Caco-2 (cell line): ENCODE measurements at regions of chr19 and their contacts with region 1.

Region 1: GRCh38 chr19:51593969-51594773 is 23.1 kb downstream of the ZNF175 start:
- DNase-seq: peak; percentile 98
- H3K4me3 ChIP-seq: peak overlapping the region; percentile 65
- H3K4me3 Mint-ChIP-seq: peak overlapping the region; percentile 93
- H3K27ac Mint-ChIP-seq: peak overlapping the region; percentile 63
- H3K4me1 ChIP-seq: peaks cover 14% of the 10 kb centered on the region
- H3K4me1 Mint-ChIP-seq: peaks cover 14% of the 10 kb centered on the region
- H3K27me3 ChIP-seq: no peaks in the 10 kb centered on the region
- H3K27me3 Mint-ChIP-seq: no peaks in the 10 kb centered on the region
- CTCF ChIP-seq: no peak

Region 2: GRCh38 chr19:51511353-51511752 is 82.8 kb before region 1 on chr19:
- CTCF ChIA-PET with region 1: no interaction called
- POLR2A ChIA-PET with region 1: no interaction called
- intact Hi-C with region 1: no loop called
- DNase-seq: no peak
- H3K4me3 ChIP-seq: no peak overlapping the region
- H3K4me3 Mint-ChIP-seq: no peak overlapping the region
- H3K27ac Mint-ChIP-seq: no peak overlapping the region
- H3K4me1 ChIP-seq: peaks cover 8% of the 10 kb centered on the region
- H3K4me1 Mint-ChIP-seq: no peaks in the 10 kb centered on the region
- H3K27me3 ChIP-seq: no peaks in the 10 kb centered on the region
- H3K27me3 Mint-ChIP-seq: peaks cover 5% of the 10 kb centered on the region
- CTCF ChIP-seq: no peak

Region 3: DNA sequence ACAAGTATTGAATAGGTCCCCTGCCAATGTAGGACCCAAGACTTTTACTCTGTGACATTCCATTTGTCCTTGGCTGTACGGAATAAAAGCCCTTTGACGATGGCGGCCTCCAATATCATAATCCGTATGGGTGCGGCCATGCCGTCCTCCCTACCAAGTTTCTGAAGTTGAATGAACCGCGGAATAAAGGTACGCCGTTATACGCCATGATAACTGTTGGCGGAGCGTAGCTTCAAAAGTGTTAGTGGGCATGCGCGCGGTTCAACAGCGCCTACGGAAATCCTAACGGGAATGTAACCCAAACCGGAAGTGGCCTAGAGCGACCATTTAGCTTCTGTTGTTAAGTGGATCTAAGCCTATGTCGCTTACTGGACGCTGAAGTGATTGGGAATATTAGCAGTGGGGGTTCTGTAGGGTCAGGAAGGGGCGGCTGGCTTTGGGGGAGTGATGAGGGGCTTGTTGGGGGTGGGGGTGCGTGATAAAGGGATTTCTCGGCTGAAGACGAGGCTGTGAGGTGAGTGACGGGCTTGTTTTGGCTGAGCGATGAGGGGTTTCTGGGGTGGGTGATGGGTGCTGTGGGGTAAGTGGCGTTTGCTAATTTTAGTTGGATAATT is 23.1 kb before region 1 on chr19 and contains the start of gene ZNF175:
- CTCF ChIA-PET with region 1: interaction called, 3 read pairs
- POLR2A ChIA-PET with region 1: no interaction called
- intact Hi-C with region 1: loop called (anchors 1 kb)
- DNase-seq: peak; percentile 92 to 95
- H3K4me3 ChIP-seq: peak within 1 kb of the TSS; percentile 65
- H3K4me3 Mint-ChIP-seq: peak within 1 kb of the TSS; percentile 99
- H3K27ac Mint-ChIP-seq: peak within 1 kb of the TSS; percentile 93
- H3K4me1 ChIP-seq: peaks cover 32% of the 10 kb centered on the region
- H3K4me1 Mint-ChIP-seq: peaks cover 16% of the 10 kb centered on the region
- H3K27me3 ChIP-seq: no peaks in the 10 kb centered on the region
- H3K27me3 Mint-ChIP-seq: no peaks in the 10 kb centered on the region
- CTCF ChIP-seq: no peak
- total RNA-seq, gene ZNF175: 8.7 and 11.5 TPM in 2 replicates